ENCODE measurements at regions of chr2 and their contacts with region 1.

Region 1: DNA sequence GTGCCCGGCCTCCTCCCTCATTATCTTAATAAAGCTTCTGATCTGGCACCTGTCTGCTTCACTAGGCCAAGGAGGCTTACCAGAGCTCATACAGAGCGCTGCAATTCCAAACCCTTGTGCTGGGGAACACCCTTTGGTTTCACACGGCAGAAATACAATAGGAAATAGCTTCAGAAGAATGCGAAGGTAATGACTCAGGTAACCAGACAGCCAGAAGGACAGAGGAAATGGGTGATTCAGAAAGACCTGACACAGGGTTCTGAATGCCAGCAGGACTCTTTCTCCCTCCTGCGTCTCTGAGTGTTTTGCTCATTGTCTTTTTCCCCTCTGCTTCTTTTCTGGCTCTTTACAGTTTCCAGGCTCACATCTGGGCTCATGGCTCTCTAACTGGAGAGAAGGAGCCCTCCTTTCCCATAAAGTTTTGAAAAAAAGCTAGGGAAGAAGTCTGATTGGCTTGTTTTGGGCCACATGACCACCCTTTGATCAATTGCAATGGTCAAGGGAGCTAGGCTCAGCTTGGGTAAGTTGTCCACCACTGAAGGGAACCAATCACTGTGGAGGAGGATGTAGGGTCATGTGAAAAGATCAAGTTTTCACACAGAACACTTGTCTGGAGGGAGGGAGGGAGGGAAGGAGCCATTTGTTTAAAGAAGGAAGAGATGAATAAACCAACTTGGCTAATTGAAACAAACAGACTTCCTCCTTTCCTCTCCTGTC is 90.5 kb upstream of the UPP2 start:
- DNase-seq: no peak
- ATAC-seq: no peak
- H3K4me3 ChIP-seq: no peak overlapping the region
- H3K27ac ChIP-seq: no peak overlapping the region
- H3K4me1 ChIP-seq: peaks cover 6% of the 10 kb centered on the region
- H3K27me3 ChIP-seq: no peaks in the 10 kb centered on the region
- CTCF ChIP-seq: no peak

Region 2: GRCh38 chr2:157777427-157777826 is 233.8 kb before region 1 on chr2:
- intact Hi-C with region 1: loop called (anchors 10 kb)
- DNase-seq: no peak
- ATAC-seq: peak in 1 of 2 donors; percentile 53
- H3K4me3 ChIP-seq: no peak overlapping the region
- H3K27ac ChIP-seq: no peak overlapping the region
- H3K4me1 ChIP-seq: peaks cover 10% of the 10 kb centered on the region
- H3K27me3 ChIP-seq: no peaks in the 10 kb centered on the region
- CTCF ChIP-seq: peak; percentile 65